Activated T-helper 2 cell treated with anti-CD3 and anti-CD28 coated beads, Interferon-gamma antibody, Interleukin-2, Interleukin-4, amounts not matched to agents 10 μg/mL and 5 μg/mL and 100 μg/mL, durations not matched to agents 14 hours and 24 hours and 36 hours (primary cell): ENCODE measurements at regions of chr4 and their contacts with region 1.

Region 1: DNA sequence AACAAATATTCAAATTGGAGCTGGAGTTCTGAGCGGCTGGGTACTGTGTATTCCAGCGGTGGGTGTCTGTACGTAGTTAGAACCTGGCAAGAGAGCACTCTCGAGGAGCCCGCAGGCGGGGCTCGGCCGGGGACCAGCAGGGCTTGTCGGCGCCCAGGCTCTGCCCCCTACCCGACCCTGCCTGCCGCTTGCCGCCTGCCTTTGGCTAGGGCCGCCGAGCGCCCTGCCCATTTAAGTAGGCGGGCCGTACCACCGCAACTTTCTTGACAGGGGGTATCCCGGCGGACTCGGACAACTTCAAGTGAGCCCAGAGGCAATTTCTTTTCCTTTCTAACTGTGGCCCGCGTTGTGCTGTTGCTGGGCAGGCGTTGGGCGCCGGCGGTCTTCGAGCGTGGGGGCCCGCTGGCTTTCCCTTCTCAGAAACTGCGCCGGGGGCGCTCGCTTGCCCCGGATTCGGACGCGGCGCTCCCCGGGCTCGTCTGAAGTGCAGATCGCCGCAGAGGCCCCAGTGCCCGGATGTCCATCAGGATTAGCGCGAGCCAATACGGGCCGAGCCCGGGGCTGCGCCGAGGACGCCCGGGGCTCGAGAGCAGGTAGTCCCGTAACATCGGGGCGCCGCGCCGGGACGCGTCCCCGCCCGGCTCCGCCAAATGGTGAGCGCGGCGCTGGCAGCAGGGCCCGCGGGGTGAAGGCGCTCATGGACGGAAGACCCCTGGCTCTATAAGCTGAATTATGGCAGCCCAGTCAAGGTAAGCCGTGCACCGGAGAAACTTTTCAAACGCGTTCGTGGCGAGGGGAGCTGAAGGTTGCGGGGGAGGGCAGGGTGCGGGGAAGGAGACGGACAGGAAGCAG is 72.1 kb downstream of the AFF1 start:
- DNase-seq: peak; percentile 89
- H3K4me3 Mint-ChIP-seq: peak overlapping the region; percentile 98
- H3K27ac Mint-ChIP-seq: peak overlapping the region; percentile 97
- H3K4me1 Mint-ChIP-seq: peaks cover 48% of the 10 kb centered on the region
- H3K27me3 Mint-ChIP-seq: no peaks in the 10 kb centered on the region

Region 2: GRCh38 chr4:86544310-86544966 is 462.5 kb before region 1 on chr4:
- intact Hi-C with region 1: loop called (anchors 1 kb)
- DNase-seq: no peak
- H3K4me3 Mint-ChIP-seq: peak overlapping the region; percentile 58
- H3K27ac Mint-ChIP-seq: peak overlapping the region; percentile 76
- H3K4me1 Mint-ChIP-seq: peaks cover 26% of the 10 kb centered on the region
- H3K27me3 Mint-ChIP-seq: peaks cover 16% of the 10 kb centered on the region

Region 3: GRCh38 chr4:86961605-86962295 is 45.2 kb before region 1 on chr4:
- intact Hi-C with region 1: loop called (anchors 2 kb)
- DNase-seq: no peak
- H3K4me3 Mint-ChIP-seq: peak overlapping the region; percentile 50
- H3K27ac Mint-ChIP-seq: peak overlapping the region; percentile 66
- H3K4me1 Mint-ChIP-seq: peaks cover 41% of the 10 kb centered on the region
- H3K27me3 Mint-ChIP-seq: no peaks in the 10 kb centered on the region

Region 4: GRCh38 chr4:87017580-87018342 is 10.9 kb after region 1 on chr4:
- intact Hi-C with region 1: loop called (anchors 1 kb)
- DNase-seq: no peak
- H3K4me3 Mint-ChIP-seq: peak overlapping the region; percentile 19
- H3K27ac Mint-ChIP-seq: peak overlapping the region; percentile 79
- H3K4me1 Mint-ChIP-seq: peaks cover 76% of the 10 kb centered on the region
- H3K27me3 Mint-ChIP-seq: no peaks in the 10 kb centered on the region

Region 5: GRCh38 chr4:87038837-87039615 is 32.1 kb after region 1 on chr4:
- intact Hi-C with region 1: no loop called
- DNase-seq: no peak
- H3K4me3 Mint-ChIP-seq: no peak overlapping the region
- H3K27ac Mint-ChIP-seq: no peak overlapping the region
- H3K4me1 Mint-ChIP-seq: peaks cover 38% of the 10 kb centered on the region
- H3K27me3 Mint-ChIP-seq: no peaks in the 10 kb centered on the region

Region 6: DNA sequence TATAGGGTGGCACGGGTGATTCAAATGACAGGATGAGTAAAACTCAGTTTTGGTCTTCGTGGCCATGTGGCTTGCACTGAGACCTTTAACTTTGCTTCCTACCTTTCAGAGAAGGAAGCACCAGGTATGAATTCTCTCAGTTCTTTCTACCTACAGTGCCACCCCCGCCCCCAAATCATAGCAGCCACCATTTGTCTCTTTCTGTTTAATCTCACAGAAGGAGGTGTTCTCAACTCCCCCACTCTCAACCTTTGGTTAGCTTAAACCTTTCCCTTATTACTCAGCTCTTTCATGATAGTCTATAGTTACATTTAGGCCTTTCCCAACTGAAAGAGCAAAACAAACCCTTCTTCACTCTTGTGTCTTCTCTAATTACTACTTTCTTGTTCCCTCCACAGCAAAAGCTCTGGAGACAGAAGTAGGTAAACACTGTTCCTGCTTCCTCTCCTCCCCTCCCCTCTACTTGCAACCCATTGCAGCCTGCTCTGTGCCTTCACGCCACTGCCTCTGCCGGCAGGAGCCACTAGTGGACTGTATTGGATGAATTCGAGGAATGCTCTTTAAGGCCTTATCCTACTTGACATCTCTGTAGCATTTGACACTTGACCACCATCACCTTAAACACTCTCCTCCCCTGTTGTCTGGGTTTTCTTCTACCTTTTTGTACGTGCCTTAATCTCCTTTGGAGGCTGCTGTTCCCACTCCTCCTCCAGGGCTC is 51.6 kb after region 1 on chr4:
- intact Hi-C with region 1: loop called (anchors 1 kb)
- DNase-seq: no peak
- H3K4me3 Mint-ChIP-seq: peak overlapping the region; percentile 15
- H3K27ac Mint-ChIP-seq: peak overlapping the region; percentile 80
- H3K4me1 Mint-ChIP-seq: peaks cover 48% of the 10 kb centered on the region
- H3K27me3 Mint-ChIP-seq: no peaks in the 10 kb centered on the region

Region 7: GRCh38 chr4:87093443-87094123 is 86.7 kb after region 1 on chr4:
- intact Hi-C with region 1: loop called (anchors 1 kb)
- DNase-seq: no peak
- H3K4me3 Mint-ChIP-seq: no peak overlapping the region
- H3K27ac Mint-ChIP-seq: peak overlapping the region; percentile 24
- H3K4me1 Mint-ChIP-seq: peaks cover 22% of the 10 kb centered on the region
- H3K27me3 Mint-ChIP-seq: no peaks in the 10 kb centered on the region

Region 8: DNA sequence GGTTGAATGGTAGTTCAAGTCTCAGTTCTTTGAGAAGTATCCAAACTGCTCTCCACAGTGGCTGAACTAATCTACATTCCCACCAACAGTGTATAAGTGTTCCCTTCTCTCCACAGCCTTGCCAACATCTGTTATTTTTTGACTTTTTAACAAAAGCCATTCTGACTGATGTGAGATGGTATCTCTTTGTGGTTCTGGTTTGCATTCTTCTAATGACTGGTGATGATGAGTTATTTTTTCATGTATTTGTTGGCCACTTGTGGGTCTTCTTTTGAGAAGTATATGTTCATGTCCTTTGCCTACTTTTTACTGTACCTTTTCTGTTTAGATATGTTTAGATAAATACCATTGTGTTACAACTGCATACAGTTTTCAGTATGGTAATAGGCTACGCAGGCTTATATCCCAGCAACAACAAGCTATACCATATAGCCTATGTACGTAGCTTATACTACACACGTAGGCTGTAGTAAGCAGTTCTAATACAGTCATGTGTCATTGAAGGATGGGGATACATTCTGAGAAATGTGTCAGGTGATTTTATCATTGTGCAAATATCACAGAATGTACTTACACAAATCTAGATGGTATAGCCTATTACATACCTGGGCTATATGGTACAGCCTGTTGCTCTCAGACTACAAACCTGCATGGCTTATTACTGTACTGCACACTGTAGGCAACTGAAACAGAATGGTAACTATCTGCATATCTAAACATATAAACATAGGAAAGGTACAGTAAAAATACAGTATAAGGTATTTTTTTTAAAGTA is 185.4 kb after region 1 on chr4:
- intact Hi-C with region 1: no loop called
- DNase-seq: no peak
- H3K4me3 Mint-ChIP-seq: no peak overlapping the region
- H3K27ac Mint-ChIP-seq: no peak overlapping the region
- H3K4me1 Mint-ChIP-seq: peaks cover 17% of the 10 kb centered on the region
- H3K27me3 Mint-ChIP-seq: no peaks in the 10 kb centered on the region